Activated T-helper 1 cell treated with anti-CD3 and anti-CD28 coated beads, Interleukin-12 subunit alpha, Interleukin-12 subunit beta, Interleukin-2, Interleukin-4 antibody, amounts not matched to agents 30 ng/mL and 10 ng/mL and 1 ng/mL, durations not matched to agents 14 hours and 24 hours and 36 hours (primary cell): ENCODE measurements at regions of chr9 and their contacts with region 1.

Region 1: DNA sequence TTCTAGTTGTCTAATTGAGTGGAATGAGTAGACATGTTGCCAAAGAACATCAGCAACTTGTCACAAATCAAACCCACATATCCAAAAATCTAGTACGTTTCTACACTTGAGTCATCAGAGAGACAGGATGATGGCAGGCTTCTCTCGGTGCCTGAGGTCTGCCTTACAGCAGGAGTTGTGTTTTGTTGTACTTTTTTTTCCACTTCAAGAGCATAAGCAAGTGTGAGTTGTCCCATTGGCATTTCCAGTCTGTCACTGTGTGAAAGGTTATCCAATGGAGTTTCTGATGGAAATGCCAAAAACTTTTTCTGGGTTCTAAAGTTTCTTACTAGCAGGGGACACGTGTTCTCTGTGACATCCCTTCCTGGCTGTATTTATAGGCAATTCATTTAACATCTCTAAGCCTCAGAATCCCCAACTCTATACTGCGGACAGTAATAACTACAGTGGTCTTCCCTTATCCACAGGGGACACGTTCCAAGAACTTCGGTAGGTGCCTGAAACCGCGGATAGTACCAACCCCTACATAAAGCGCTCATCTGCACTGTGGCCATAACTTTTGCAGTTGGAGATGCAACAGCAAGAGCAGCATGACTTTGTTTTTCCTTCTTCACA is 246.5 kb downstream of the SYK start:
- DNase-seq: peak; percentile 31
- H3K4me3 Mint-ChIP-seq: peak overlapping the region; percentile 65
- H3K27ac Mint-ChIP-seq: peak overlapping the region; percentile 92
- H3K4me1 Mint-ChIP-seq: peaks cover 67% of the 10 kb centered on the region
- H3K27me3 Mint-ChIP-seq: peaks cover 4% of the 10 kb centered on the region

Region 2: GRCh38 chr9:91060503-91061343 is 12.6 kb after region 1 on chr9:
- intact Hi-C with region 1: no loop called
- DNase-seq: no peak
- H3K4me3 Mint-ChIP-seq: peak overlapping the region; percentile 6
- H3K27ac Mint-ChIP-seq: peak overlapping the region; percentile 70
- H3K4me1 Mint-ChIP-seq: peaks cover 40% of the 10 kb centered on the region
- H3K27me3 Mint-ChIP-seq: peaks cover 2% of the 10 kb centered on the region

Region 3: GRCh38 chr9:91071185-91071990 is 23.3 kb after region 1 on chr9:
- intact Hi-C with region 1: loop called (anchors 1 kb)
- DNase-seq: peak; percentile 35
- H3K4me3 Mint-ChIP-seq: peak overlapping the region; percentile 68
- H3K27ac Mint-ChIP-seq: peak overlapping the region; percentile 96
- H3K4me1 Mint-ChIP-seq: peaks cover 17% of the 10 kb centered on the region
- H3K27me3 Mint-ChIP-seq: peaks cover 2% of the 10 kb centered on the region

Region 4: DNA sequence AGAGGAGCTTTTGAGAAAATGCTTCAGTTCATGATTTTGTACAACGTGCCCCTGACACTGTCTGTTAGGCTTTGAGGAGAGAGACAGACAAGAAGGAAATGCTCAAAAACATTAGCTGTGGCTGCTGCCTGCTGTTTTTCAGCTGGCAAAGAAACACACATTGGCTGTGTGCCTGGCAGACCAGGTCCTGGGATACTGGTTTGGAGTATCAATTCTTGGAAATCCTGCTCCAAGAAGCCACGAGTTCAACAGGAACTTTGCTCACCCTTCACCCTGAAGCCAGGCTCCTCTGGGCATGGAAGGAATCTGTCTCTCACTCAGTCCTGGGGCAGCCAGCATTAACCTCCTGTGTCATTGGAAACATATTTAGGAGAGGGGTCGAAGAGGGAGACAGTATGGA is 68.1 kb after region 1 on chr9:
- intact Hi-C with region 1: no loop called
- DNase-seq: no peak
- H3K4me3 Mint-ChIP-seq: no peak overlapping the region
- H3K27ac Mint-ChIP-seq: no peak overlapping the region
- H3K4me1 Mint-ChIP-seq: peaks cover 47% of the 10 kb centered on the region
- H3K27me3 Mint-ChIP-seq: peaks cover 11% of the 10 kb centered on the region

Region 5: GRCh38 chr9:91131433-91131839 is 83.3 kb after region 1 on chr9:
- intact Hi-C with region 1: loop called (anchors 1 kb)
- DNase-seq: peak; percentile 70
- H3K4me3 Mint-ChIP-seq: peak overlapping the region; percentile 63
- H3K27ac Mint-ChIP-seq: peak overlapping the region; percentile 96
- H3K4me1 Mint-ChIP-seq: peaks cover 42% of the 10 kb centered on the region
- H3K27me3 Mint-ChIP-seq: no peaks in the 10 kb centered on the region

Region 6: DNA sequence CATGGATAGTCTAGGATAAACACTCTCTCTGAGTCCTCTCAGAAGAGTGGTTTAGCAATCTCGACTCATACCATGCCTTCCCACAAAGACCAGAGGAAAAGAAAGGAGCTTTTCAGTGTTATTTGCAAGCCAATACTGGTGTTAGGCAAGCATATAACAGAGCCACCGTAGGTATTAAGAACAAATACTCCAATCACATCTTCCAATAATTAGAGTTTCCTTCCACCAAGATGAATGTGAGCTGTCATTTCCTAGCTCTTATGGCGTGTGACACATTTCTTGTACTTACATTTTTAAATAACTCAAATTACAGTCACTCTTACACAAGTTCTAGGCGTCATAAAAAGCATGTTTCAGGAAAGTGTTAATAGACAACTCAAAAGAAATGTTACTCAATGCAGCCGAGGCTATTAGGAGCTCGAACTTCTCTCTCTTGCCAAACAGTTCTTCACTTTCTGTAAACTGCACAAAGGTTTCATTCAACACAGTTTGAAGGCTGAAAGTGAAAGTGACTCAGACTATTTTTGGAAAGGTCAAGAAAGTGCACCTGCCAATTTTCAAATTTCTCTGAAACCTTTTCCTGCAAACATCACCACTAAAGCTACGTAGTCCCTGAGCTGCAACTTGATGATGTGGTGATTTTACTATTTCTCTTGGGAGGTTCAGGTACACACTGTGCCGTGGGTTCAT is 159.8 kb after region 1 on chr9:
- intact Hi-C with region 1: loop called (anchors 1 kb)
- DNase-seq: no peak
- H3K4me3 Mint-ChIP-seq: peak overlapping the region; percentile 68
- H3K27ac Mint-ChIP-seq: peak overlapping the region; percentile 95
- H3K4me1 Mint-ChIP-seq: peaks cover 59% of the 10 kb centered on the region
- H3K27me3 Mint-ChIP-seq: no peaks in the 10 kb centered on the region

Region 7: DNA sequence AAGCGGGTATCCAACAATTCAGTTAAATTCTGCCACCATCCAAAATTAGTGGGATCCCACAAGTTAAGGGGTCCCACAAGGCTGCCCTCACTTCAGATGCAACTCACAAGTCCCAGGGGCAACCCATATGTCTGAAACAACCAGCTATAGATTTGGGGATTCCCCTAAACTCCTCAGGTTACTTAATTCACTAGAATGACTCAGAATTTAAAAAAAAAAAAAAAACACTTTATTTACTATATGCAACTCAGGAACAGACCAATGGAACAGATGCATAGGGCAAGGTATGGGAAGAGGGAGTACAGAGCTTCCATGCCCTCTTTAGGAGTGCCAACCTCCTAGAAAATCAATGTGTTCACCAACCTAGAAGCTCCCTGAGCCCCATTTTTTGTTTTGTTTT is 298.6 kb after region 1 on chr9:
- intact Hi-C with region 1: loop called (anchors 1 kb)
- DNase-seq: no peak
- H3K4me3 Mint-ChIP-seq: no peak overlapping the region
- H3K27ac Mint-ChIP-seq: peak overlapping the region; percentile 67
- H3K4me1 Mint-ChIP-seq: peaks cover 56% of the 10 kb centered on the region
- H3K27me3 Mint-ChIP-seq: no peaks in the 10 kb centered on the region

Region 8: GRCh38 chr9:91395553-91396471 is 347.7 kb after region 1 on chr9:
- intact Hi-C with region 1: loop called (anchors 1 kb)
- DNase-seq: peak; percentile 33
- H3K4me3 Mint-ChIP-seq: peak overlapping the region; percentile 73
- H3K27ac Mint-ChIP-seq: peak overlapping the region; percentile 84
- H3K4me1 Mint-ChIP-seq: peaks cover 21% of the 10 kb centered on the region
- H3K27me3 Mint-ChIP-seq: peaks cover 11% of the 10 kb centered on the region